CD8-positive, alpha-beta T cell (primary cell): ENCODE measurements at regions of chr2 and their contacts with region 1.

Region 1: DNA sequence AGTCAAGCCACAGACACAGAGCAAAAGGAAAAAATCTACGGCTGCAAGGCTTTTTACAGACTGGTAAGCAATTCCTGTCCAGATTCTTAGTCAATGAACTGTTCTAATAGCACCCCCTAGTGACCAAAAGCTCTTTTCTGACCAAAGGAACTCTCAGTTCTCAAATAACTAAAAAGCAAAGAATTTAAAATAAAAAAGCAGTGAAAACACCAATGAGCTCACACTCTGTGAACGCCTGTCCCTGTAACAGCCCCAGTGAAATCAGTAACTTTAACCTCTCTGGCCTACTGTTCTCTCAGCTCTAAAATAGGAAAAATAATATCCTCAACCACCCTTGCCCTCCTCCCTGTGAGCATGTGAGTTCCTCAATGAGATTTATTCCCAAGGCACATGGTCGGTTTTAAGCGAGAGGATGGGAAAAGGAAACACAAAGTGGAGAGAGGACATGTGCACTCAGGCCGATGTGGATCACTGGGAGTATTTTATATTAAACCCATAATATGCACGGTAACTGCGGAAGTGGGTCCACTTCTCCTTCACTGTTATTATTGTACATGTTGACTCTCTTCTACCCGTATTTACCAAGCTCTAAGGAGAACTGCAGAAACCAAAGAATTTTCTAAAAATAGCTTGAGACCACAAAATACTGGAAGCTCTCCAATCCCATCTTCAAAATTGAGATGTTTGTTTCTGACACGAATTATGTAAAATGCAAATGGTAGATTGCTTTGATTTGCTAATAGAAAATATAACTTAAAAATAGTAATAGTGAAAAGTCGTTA is 128.5 kb downstream of the STK39 start:
- DNase-seq: peak in 3 of 9 experiments; percentile 8 to 58 (median 48)
- ATAC-seq: no peak
- H3K4me3 ChIP-seq: no peak overlapping the region
- H3K4me3 Mint-ChIP-seq: no peak overlapping the region
- H3K27ac ChIP-seq: no peak overlapping the region
- H3K27ac Mint-ChIP-seq: no peak overlapping the region
- H3K4me1 ChIP-seq: no peaks in the 10 kb centered on the region
- H3K4me1 Mint-ChIP-seq: no peaks in the 10 kb centered on the region
- H3K27me3 ChIP-seq: no peaks in the 10 kb centered on the region
- H3K27me3 Mint-ChIP-seq: no peaks in the 10 kb centered on the region
- CTCF ChIP-seq: peak; percentile 54

Region 2: DNA sequence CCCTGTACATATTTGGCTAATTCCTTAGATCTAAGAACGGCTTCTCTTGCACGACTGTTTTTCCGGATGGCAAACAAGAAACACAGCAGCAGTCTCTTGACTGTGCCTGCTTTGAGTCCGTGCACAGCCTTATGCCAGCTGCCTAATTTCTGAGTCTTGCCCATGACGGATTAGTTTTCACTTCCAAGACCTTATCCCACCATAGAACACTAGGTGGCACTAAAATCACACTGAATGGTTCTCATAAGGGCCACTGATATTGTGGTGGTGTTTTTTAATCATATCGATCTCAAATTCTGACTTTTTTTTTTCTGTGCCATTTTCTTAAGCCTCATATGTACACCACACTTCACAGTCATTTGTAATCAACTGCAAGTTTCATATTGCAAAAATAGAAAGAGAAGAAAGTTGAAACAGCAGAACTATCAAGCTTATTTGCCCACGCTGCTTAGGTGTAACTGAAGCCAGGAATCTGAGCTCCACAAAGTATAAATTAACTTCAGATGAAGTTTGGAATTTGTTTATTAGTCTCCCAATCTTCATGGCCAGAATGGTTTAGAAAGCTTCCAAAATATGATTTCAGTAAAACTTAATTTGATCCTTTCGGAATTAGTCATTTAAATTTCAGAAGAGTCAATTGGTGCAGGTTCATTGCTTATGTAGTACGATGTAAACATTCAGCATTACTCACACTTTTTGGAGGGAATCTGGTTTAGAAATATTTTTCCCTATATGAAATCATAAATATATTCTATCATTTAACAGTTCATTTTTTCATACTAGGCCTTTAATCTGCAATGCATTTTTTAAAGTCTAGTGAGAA is 1579.4 kb before region 1 on chr2:
- CTCF ChIA-PET with region 1: interaction called, 5 read pairs
- POLR2A ChIA-PET with region 1: no interaction called
- intact Hi-C with region 1: loop called in 1 of 2 experiments (anchors 1 kb)
- DNase-seq: peak in 3 of 9 experiments; percentile 5 to 55 (median 40)
- ATAC-seq: peak; percentile 62
- H3K4me3 ChIP-seq: no peak overlapping the region
- H3K4me3 Mint-ChIP-seq: no peak overlapping the region
- H3K27ac ChIP-seq: no peak overlapping the region
- H3K27ac Mint-ChIP-seq: no peak overlapping the region
- H3K4me1 ChIP-seq: no peaks in the 10 kb centered on the region
- H3K4me1 Mint-ChIP-seq: no peaks in the 10 kb centered on the region
- H3K27me3 ChIP-seq: no peaks in the 10 kb centered on the region
- H3K27me3 Mint-ChIP-seq: peaks cover 3% of the 10 kb centered on the region
- CTCF ChIP-seq: peak; percentile 75

Region 3: DNA sequence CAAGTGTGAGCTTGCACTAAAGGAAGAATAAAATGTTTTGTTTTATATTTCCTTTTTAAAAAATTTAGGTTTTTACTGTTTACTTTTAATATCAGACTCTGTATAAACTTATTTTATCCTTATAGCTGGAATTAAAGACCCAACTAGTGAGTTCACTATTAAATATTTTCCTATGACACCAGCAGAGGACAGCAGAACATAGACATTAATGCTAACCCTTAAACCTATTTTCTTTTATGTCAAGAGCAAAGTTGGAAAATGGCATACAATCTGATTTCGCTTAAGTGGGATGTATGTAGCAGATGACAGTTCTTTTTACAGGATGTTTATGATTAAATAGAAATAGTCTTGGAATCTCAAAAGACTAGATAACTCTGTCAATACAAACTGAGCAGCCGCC is 1418.8 kb before region 1 on chr2:
- CTCF ChIA-PET with region 1: no interaction called
- POLR2A ChIA-PET with region 1: no interaction called
- intact Hi-C with region 1: loop called in 1 of 2 experiments (anchors 5 kb)
- DNase-seq: peak in 1 of 9 experiments; percentile 9
- ATAC-seq: no peak
- H3K4me3 ChIP-seq: no peak overlapping the region
- H3K4me3 Mint-ChIP-seq: no peak overlapping the region
- H3K27ac ChIP-seq: no peak overlapping the region
- H3K27ac Mint-ChIP-seq: no peak overlapping the region
- H3K4me1 ChIP-seq: no peaks in the 10 kb centered on the region
- H3K4me1 Mint-ChIP-seq: no peaks in the 10 kb centered on the region
- H3K27me3 ChIP-seq: no peaks in the 10 kb centered on the region
- H3K27me3 Mint-ChIP-seq: peaks cover 3% of the 10 kb centered on the region
- CTCF ChIP-seq: peak; percentile 32

Region 4: GRCh38 chr2:168030862-168031624 is 87.9 kb before region 1 on chr2:
- CTCF ChIA-PET with region 1: no interaction called
- POLR2A ChIA-PET with region 1: no interaction called
- intact Hi-C with region 1: no loop called
- DNase-seq: no peak
- ATAC-seq: no peak
- H3K4me3 ChIP-seq: no peak overlapping the region
- H3K4me3 Mint-ChIP-seq: no peak overlapping the region
- H3K27ac ChIP-seq: no peak overlapping the region
- H3K27ac Mint-ChIP-seq: no peak overlapping the region
- H3K4me1 ChIP-seq: no peaks in the 10 kb centered on the region
- H3K4me1 Mint-ChIP-seq: peaks cover 5% of the 10 kb centered on the region
- H3K27me3 ChIP-seq: no peaks in the 10 kb centered on the region
- H3K27me3 Mint-ChIP-seq: no peaks in the 10 kb centered on the region
- CTCF ChIP-seq: no peak

Region 5: DNA sequence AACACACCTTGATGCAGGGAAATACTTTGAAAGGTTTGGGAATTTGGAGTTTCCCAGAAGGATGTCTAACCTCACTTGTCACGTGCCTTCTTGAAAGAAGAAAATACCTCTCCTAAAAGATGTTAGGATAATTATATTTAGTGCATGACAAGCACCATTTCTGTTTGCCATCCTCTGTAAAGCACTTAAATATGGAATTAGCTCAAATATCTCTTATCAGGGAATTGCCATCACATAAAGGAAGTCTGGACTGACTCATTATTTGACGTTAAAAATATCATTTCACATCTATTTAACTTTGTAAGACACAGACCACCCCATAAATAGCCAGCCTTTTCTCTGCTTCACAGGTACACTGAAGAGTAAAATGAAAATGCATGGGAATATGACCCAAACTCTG is 11.6 kb before region 1 on chr2:
- CTCF ChIA-PET with region 1: interaction called, 30 read pairs
- POLR2A ChIA-PET with region 1: no interaction called
- intact Hi-C with region 1: no loop called
- DNase-seq: no peak
- ATAC-seq: no peak
- H3K4me3 ChIP-seq: no peak overlapping the region
- H3K4me3 Mint-ChIP-seq: no peak overlapping the region
- H3K27ac ChIP-seq: no peak overlapping the region
- H3K27ac Mint-ChIP-seq: no peak overlapping the region
- H3K4me1 ChIP-seq: no peaks in the 10 kb centered on the region
- H3K4me1 Mint-ChIP-seq: no peaks in the 10 kb centered on the region
- H3K27me3 ChIP-seq: no peaks in the 10 kb centered on the region
- H3K27me3 Mint-ChIP-seq: no peaks in the 10 kb centered on the region
- CTCF ChIP-seq: no peak